CD8-positive, alpha-beta T cell (primary cell): ENCODE measurements at regions of chr11 and their contacts with region 1.

Region 1: GRCh38 chr11:57530596-57531507 is at the start of gene TIMM10:
- DNase-seq: peak; percentile 86 to 98 (median 92)
- ATAC-seq: peak; percentile 92
- H3K4me3 ChIP-seq: peak within 1 kb of the TSS; percentile 70 to 74
- H3K4me3 Mint-ChIP-seq: peak within 1 kb of the TSS; percentile 88
- H3K27ac ChIP-seq: peak within 1 kb of the TSS; percentile 77 to 87
- H3K27ac Mint-ChIP-seq: peak within 1 kb of the TSS; percentile 94
- H3K4me1 ChIP-seq: peaks cover 19% of the 10 kb centered on the region
- H3K4me1 Mint-ChIP-seq: peaks cover 39% of the 10 kb centered on the region
- H3K27me3 ChIP-seq: no peaks in the 10 kb centered on the region
- H3K27me3 Mint-ChIP-seq: no peaks in the 10 kb centered on the region
- CTCF ChIP-seq: no peak
- total RNA-seq, gene TIMM10: 16.4 to 18.9 TPM

Region 2: DNA sequence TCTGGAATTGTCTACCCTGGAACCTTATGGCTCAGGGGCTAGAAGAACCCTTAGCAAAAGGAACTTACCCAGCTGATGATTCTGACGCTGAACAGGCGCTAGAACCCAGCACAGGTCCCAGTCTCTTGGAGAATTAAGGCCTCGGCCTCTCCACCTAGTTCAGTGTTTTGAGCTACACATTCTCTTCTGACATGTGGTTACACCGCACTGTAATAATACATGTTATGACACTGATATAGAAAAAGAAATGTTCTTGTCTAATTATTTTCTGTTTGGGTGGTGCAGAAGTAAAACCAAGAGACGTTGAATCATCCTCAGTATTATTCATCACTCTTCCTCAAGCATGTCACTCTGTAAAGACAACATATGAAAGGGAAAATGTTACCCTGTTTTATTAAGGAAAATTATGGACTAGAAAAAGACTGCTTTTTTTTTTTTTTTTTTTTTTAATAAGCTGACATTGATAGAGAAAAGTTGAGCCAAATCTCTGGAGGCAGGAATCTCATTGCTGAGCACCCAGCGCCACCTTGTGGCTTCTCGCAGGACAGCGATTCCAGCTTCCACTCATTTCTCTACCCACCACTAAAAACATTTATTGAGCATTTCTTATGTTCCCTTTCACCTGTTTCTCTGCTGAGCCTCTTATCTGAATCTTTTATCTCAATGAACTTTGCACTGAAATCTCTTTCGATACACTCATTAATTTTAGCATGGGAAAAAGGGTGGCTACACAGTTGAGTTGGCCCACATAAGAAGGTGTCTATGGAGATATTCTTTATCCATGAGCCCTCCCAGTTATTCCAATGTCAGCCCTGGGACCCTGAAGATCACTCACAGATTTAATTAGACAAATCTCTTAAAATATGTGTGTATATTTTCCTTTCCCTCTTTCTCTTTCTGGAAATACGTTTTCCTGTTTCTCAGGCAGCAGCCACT is 281.2 kb before region 1 on chr11:
- CTCF ChIA-PET with region 1: no interaction called
- POLR2A ChIA-PET with region 1: no interaction called
- intact Hi-C with region 1: no loop called
- DNase-seq: peak in 6 of 9 experiments; percentile 9 to 50 (median 40)
- ATAC-seq: no peak
- H3K4me3 ChIP-seq: no peak overlapping the region
- H3K4me3 Mint-ChIP-seq: no peak overlapping the region
- H3K27ac ChIP-seq: no peak overlapping the region
- H3K27ac Mint-ChIP-seq: no peak overlapping the region
- H3K4me1 ChIP-seq: no peaks in the 10 kb centered on the region
- H3K4me1 Mint-ChIP-seq: peaks cover 5% of the 10 kb centered on the region
- H3K27me3 ChIP-seq: peaks cover 0 to under 1% of the 10 kb centered on the region in 2 experiments
- H3K27me3 Mint-ChIP-seq: peaks cover 42% of the 10 kb centered on the region
- CTCF ChIP-seq: peak; percentile 85

Region 3: DNA sequence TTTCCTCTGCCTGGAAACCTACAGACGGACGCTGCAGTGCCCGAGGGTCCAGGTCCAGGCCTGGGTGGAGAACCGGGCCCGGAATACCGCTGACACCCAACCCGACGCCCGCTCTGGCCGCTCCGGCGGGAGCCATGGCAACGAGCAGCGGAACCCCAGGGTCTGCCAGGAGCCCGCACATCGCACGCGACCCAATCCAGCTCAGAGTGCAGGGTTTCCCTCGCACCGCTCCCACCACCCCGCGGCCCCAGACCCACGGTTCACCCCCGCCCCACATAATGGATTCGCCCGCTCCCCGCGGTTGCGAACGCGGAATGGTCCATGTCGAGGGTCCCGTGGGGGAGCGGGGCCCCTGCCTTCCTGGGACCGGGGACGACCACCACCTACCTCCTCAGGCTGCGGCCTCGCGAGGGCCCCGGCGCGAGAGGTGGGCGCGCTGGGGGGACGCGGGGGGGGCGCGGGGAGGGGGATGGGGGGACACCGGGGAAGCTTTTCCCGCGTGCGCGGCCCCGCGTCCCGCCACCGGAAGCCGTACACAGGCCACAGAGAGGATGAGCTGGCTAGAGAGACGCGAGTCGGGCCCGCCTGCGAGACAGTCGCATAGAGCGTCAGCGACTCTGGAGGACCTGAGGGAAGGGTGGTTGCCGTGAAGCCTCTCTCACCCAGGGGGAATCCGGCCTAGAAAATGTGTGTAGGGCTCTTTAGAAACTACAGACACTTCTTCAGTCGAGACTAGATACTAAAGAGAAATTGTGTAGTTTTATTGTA is 195.3 kb before region 1 on chr11 and contains the start of gene SSRP1:
- CTCF ChIA-PET with region 1: interaction called, 7 read pairs
- POLR2A ChIA-PET with region 1: interaction called, 3 read pairs
- intact Hi-C with region 1: loop called (anchors 1 kb)
- DNase-seq: peak; percentile 70 to 95 (median 86)
- ATAC-seq: peak; percentile 96
- H3K4me3 ChIP-seq: peak within 1 kb of the TSS; percentile 78 to 82
- H3K4me3 Mint-ChIP-seq: peak within 1 kb of the TSS; percentile 86
- H3K27ac ChIP-seq: peak within 1 kb of the TSS; percentile 83 to 91
- H3K27ac Mint-ChIP-seq: peak within 1 kb of the TSS; percentile 94
- H3K4me1 ChIP-seq: peaks cover 23% of the 10 kb centered on the region
- H3K4me1 Mint-ChIP-seq: peaks cover 33% of the 10 kb centered on the region
- H3K27me3 ChIP-seq: no peaks in the 10 kb centered on the region
- H3K27me3 Mint-ChIP-seq: no peaks in the 10 kb centered on the region
- CTCF ChIP-seq: no peak
- total RNA-seq, gene SSRP1: 34.3 to 36.3 TPM

Region 4: DNA sequence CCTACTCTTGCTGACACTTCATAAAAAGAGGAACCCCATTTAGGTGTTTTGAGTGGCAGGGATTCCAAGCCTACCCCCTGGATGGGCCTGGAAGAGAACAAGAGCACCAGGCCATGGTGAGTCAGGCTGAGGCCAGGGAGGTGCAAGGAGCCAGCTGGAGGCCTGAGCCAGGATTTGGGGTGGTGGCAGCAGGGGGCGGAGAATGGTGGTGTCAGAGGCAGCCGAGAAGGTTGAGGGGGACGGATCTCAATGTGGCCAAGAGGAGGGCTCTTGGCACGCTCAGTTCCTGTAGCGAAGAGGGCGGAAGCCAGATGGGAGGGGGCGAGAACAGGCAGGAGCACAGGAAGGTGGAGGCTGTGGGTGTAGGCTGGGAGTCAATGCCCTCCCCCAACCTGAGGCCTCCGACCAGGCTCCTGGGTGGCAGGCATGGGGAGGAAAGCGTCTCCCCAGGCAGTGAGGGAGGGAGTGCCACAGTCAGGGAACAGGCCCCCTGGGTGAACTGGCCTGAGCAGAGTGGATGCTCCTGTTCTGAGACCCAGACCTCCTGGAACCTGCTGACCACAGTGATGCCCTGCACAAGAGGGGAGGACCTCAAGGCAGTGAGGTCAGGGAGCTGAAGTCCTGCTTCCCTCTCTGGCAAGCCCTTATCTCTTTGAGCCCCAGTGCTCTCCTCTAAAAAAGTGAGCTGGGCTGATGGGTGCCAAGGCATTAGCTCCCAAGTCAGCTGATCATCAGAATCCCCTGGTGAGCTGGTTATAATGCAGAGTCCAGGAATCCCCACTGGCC is 56.6 kb before region 1 on chr11:
- CTCF ChIA-PET with region 1: interaction called, 29 read pairs
- POLR2A ChIA-PET with region 1: interaction called, 4 read pairs
- intact Hi-C with region 1: no loop called
- DNase-seq: peak in 7 of 9 experiments; percentile 31 to 79 (median 58)
- ATAC-seq: peak; percentile 75
- H3K4me3 ChIP-seq: peak overlapping the region in 1 of 2 experiments; percentile 8
- H3K4me3 Mint-ChIP-seq: peak overlapping the region; percentile 70
- H3K27ac ChIP-seq: no peak overlapping the region
- H3K27ac Mint-ChIP-seq: peak overlapping the region; percentile 35
- H3K4me1 ChIP-seq: peaks cover 29% of the 10 kb centered on the region
- H3K4me1 Mint-ChIP-seq: peaks cover 37% of the 10 kb centered on the region
- H3K27me3 ChIP-seq: no peaks in the 10 kb centered on the region
- H3K27me3 Mint-ChIP-seq: no peaks in the 10 kb centered on the region
- CTCF ChIP-seq: no peak

Region 5: DNA sequence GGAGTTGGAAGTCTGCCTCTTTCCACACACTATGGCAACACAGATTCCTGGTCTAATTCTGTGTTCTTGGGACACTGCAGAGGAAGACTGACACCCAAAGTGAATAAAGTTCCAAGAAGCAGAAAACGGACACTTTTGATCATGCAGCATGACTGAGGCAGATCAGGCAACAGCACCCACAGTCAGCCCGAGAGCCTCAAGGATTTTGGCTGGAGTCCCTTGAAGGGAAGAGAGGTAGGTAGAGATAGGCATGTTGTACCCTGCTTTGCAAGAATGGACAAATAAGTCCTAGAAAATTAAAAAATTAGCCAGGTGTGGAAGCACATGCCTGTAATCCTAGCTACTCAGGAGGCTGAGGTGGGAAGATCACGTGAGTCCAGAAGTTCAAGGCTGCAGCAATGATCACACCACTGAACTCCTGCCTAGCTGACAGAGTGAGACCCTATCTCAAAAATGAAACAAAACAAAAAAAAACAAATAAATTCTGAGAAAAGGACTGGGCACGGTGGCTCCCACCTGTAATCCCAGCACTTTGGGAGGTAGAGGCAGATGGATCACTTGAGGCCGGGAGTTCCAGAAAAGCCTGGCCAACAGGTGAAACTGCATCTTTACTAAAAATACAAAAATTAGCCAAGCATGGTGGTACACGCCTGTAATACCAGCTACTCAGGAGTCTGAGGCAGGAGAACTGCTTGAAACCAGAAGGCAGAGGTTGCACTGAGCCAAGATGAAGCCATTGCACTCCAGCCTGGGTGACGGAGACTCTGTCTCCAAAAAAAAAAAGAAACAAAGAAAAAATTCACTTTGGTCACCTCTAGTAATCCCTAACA is 22.3 kb before region 1 on chr11:
- CTCF ChIA-PET with region 1: interaction called, 130 read pairs
- POLR2A ChIA-PET with region 1: interaction called, 3 read pairs
- intact Hi-C with region 1: no loop called
- DNase-seq: no peak
- ATAC-seq: no peak
- H3K4me3 ChIP-seq: no peak overlapping the region
- H3K4me3 Mint-ChIP-seq: no peak overlapping the region
- H3K27ac ChIP-seq: no peak overlapping the region
- H3K27ac Mint-ChIP-seq: no peak overlapping the region
- H3K4me1 ChIP-seq: peaks cover 22% of the 10 kb centered on the region
- H3K4me1 Mint-ChIP-seq: peaks cover 29% of the 10 kb centered on the region
- H3K27me3 ChIP-seq: no peaks in the 10 kb centered on the region
- H3K27me3 Mint-ChIP-seq: no peaks in the 10 kb centered on the region
- CTCF ChIP-seq: no peak

Region 6: GRCh38 chr11:57649826-57650738 is 119.2 kb after region 1 on chr11 and contains the start of gene YPEL4:
- CTCF ChIA-PET with region 1: interaction called, 19 read pairs
- POLR2A ChIA-PET with region 1: interaction called, 3 read pairs
- intact Hi-C with region 1: loop called in 1 of 2 experiments (anchors 2 kb)
- DNase-seq: peak; percentile 52 to 93 (median 79)
- ATAC-seq: peak; percentile 88
- H3K4me3 ChIP-seq: peak within 1 kb of the TSS; percentile 53 to 78
- H3K4me3 Mint-ChIP-seq: peak within 1 kb of the TSS; percentile 86
- H3K27ac ChIP-seq: peak within 1 kb of the TSS; percentile 41 to 68
- H3K27ac Mint-ChIP-seq: peak within 1 kb of the TSS; percentile 91
- H3K4me1 ChIP-seq: peaks cover 19% of the 10 kb centered on the region
- H3K4me1 Mint-ChIP-seq: peaks cover 53% of the 10 kb centered on the region
- H3K27me3 ChIP-seq: peaks cover 0 to 20% of the 10 kb centered on the region in 2 experiments
- H3K27me3 Mint-ChIP-seq: peaks cover 41% of the 10 kb centered on the region
- CTCF ChIP-seq: no peak
- total RNA-seq, gene YPEL4: 7.2 to 7.9 TPM

Region 7: DNA sequence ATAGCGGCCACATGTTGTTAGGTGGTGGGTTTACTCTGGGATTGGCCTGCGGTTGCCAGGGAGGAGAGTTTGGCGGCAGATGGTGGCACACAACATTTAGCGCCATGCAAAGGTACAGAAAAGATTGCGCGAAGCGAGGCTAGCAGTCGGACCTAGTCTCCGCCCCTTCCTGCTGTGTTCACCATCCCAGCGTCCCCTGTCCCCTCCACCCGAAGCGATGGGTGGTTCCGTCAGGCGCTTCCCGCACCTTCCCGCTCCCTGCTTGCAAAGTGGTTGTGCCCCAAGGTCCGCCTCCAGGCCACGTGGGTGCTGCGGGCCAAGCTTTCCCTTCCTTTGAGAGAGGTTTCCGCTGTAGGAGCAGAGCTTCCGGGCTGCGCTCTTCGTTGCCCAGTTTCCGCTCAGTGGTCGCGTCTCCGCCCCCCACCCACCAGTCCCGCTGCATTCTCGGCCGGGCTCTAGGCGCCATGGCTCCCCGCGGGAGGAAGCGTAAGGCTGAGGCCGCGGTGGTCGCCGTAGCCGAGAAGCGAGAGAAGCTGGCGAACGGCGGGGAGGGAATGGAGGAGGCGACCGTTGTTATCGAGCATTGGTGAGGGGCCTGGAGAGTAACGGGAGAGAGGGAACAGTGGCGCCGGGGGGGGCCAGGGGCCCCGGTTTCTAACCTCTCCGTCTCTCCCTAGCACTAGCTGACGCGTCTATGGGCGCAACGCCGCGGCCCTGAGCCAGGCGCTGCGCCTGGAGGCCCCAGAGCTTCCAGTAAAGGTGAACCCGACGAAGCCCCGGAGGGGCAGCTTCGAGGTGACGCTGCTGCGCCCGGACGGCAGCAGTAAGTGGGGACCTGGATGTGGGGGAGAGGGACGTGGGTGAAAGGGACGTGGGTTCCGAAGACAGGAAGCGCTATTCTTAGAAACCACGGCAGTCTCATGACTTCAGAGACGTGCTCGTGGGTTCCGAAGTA is 210.6 kb after region 1 on chr11 and contains the start of gene SELENOH:
- CTCF ChIA-PET with region 1: no interaction called
- POLR2A ChIA-PET with region 1: interaction called, 3 read pairs
- intact Hi-C with region 1: loop called (anchors 1 kb)
- DNase-seq: peak; percentile 83 to 97 (median 91)
- ATAC-seq: peak; percentile 85
- H3K4me3 ChIP-seq: peak within 1 kb of the TSS; percentile 90 to 97
- H3K4me3 Mint-ChIP-seq: peak within 1 kb of the TSS; percentile 92
- H3K27ac ChIP-seq: peak within 1 kb of the TSS; percentile 97
- H3K27ac Mint-ChIP-seq: peak within 1 kb of the TSS; percentile 98
- H3K4me1 ChIP-seq: peaks cover 34% of the 10 kb centered on the region
- H3K4me1 Mint-ChIP-seq: peaks cover 41% of the 10 kb centered on the region
- H3K27me3 ChIP-seq: no peaks in the 10 kb centered on the region
- H3K27me3 Mint-ChIP-seq: no peaks in the 10 kb centered on the region
- CTCF ChIP-seq: no peak
- total RNA-seq, gene SELENOH: 40.8 to 44.1 TPM